ENCODE measurements at regions of chr16 and their contacts with region 1.

Region 1: DNA sequence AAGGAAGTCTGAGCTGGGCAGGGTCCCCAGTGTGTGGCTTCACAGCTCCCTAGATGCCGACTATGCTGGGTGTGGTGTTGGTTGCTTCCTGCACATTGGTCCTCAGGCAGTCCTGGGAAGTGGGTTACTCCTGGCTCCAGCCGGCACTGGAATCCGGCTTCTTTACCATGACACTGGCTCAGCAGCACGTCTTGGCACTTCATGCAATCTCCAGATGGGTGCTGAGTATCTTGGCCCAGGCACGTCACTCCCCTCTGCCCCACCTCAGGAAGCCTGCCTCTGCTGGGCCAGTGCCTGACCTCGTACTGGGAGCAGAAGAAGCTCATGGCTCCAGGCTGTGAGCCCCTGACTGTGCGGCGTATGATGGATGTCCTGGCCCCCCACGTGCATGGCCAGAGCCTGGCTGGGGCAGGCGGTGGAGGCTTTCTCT is 24.5 kb downstream of the FCSK start:
- DNase-seq: no peak
- ATAC-seq: no peak
- H3K4me3 Mint-ChIP-seq: no peak overlapping the region
- H3K27ac Mint-ChIP-seq: peak overlapping the region; percentile 25
- H3K4me1 Mint-ChIP-seq: peaks cover 29% of the 10 kb centered on the region
- H3K27me3 Mint-ChIP-seq: no peaks in the 10 kb centered on the region
- CTCF ChIP-seq: no peak

Region 2: DNA sequence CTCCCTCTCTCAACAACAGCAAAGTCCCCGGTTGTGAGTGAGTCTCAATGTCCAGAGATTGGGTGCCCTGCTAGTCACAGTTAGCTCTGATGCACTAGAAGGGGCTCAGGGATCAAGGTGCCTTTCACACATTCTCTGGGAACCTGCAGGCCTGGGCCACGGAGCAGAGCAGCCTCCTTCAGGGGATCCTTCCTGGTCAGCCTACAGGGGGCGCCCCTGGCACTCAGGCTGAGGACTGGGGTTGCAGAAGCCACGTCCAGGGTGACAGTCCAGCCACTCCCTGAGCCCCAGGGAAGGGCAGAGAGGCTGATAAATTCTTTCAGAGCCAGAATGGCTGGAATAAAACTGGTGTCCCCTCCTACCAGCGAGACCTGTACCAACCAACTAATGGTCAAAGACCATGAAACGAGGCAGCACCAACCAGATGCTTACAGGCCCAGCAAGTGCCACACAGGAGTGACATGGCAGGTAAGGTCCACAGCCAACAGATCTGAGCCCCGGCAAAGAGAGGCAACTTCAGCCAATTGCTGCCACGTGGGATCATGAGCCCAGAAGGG is 83.5 kb before region 1 on chr16:
- CTCF ChIA-PET with region 1: interaction called, 5 read pairs
- POLR2A ChIA-PET with region 1: no interaction called
- intact Hi-C with region 1: loop called (anchors 5 kb)
- DNase-seq: peak; percentile 73
- ATAC-seq: peak; percentile 93
- H3K4me3 Mint-ChIP-seq: no peak overlapping the region
- H3K27ac Mint-ChIP-seq: no peak overlapping the region
- H3K4me1 Mint-ChIP-seq: peaks cover 4% of the 10 kb centered on the region
- H3K27me3 Mint-ChIP-seq: no peaks in the 10 kb centered on the region
- CTCF ChIP-seq: peak; percentile 85

Region 3: GRCh38 chr16:70508281-70508680 is 29.4 kb after region 1 on chr16:
- CTCF ChIA-PET with region 1: no interaction called
- POLR2A ChIA-PET with region 1: no interaction called
- intact Hi-C with region 1: no loop called
- DNase-seq: no peak
- ATAC-seq: no peak
- H3K4me3 Mint-ChIP-seq: no peak overlapping the region
- H3K27ac Mint-ChIP-seq: peak overlapping the region; percentile 73
- H3K4me1 Mint-ChIP-seq: peaks cover 7% of the 10 kb centered on the region
- H3K27me3 Mint-ChIP-seq: no peaks in the 10 kb centered on the region
- CTCF ChIP-seq: no peak